MCF 10A (cell line): ENCODE measurements at regions of chr3 and their contacts with region 1.

Region 1: GRCh38 chr3:53255775-53256703 is at the start of gene TKT:
- DNase-seq: peak; percentile 84
- H3K4me3 Mint-ChIP-seq: peak within 1 kb of the TSS; percentile 95
- H3K27ac Mint-ChIP-seq: peak within 1 kb of the TSS; percentile 67
- H3K4me1 Mint-ChIP-seq: peaks cover 23% of the 10 kb centered on the region
- H3K27me3 Mint-ChIP-seq: no peaks in the 10 kb centered on the region
- CTCF ChIP-seq: no peak
- total RNA-seq, gene TKT: 179 and 326 TPM in 2 replicates

Region 2: GRCh38 chr3:53092942-53093341 is 163.1 kb before region 1 on chr3:
- CTCF ChIA-PET with region 1: no interaction called
- POLR2A ChIA-PET with region 1: no interaction called
- intact Hi-C with region 1: no loop called
- DNase-seq: no peak
- H3K4me3 Mint-ChIP-seq: no peak overlapping the region
- H3K27ac Mint-ChIP-seq: no peak overlapping the region
- H3K4me1 Mint-ChIP-seq: no peaks in the 10 kb centered on the region
- H3K27me3 Mint-ChIP-seq: no peaks in the 10 kb centered on the region
- CTCF ChIP-seq: no peak

Region 3: DNA sequence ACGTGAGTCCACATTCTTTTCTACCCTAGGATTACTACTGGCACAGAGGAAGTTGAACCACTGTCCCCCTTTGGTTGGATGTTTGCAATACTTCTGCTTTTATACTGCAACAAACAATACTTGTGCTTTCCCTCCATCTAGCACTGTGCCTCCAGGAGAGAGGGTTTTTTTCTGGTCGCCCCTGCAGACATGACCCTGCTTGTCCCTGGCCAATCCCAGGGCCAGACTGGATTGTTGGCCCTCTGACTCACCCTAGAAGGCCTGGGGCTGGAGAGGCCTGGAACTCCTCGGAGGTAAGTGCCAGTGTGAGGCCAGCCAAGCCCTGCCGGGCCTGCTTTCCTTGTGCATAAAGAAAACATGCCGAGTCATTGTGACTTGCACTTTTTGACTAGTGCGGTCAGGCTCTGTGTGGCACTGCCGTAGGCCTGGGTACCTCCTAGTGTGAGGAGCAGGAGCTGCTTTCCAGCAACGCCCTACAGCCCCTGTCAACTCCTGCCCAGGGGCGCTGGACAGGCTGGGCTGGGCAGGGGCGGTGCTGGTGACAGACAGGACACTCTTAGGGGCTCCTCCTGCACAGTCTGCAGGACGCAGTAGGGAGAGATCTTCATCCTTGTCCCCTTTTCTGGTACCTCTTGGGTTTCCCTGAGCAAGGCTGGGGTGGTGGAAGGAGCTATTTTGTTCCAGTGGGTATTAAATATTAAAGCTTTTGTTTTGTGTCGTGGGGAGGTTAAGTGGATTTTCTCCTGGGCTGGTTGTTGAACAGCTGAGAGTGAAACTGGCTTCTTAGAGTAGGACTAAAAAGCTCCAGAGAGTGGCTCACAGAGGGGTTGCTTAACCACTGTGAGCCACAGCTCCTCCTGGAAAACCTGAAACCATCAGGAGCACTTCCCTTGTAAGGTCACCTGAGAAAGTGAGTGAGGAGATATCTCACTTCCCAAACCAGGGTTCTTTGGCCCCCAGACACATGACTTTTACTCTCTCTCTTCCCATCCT is 14.1 kb after region 1 on chr3:
- CTCF ChIA-PET with region 1: interaction called, 7 read pairs
- POLR2A ChIA-PET with region 1: interaction called, 62 read pairs
- intact Hi-C with region 1: no loop called
- DNase-seq: peak; percentile 100
- H3K4me3 Mint-ChIP-seq: peak overlapping the region; percentile 53
- H3K27ac Mint-ChIP-seq: peak overlapping the region; percentile 99
- H3K4me1 Mint-ChIP-seq: peaks cover 11% of the 10 kb centered on the region
- H3K27me3 Mint-ChIP-seq: no peaks in the 10 kb centered on the region
- CTCF ChIP-seq: no peak

Region 4: GRCh38 chr3:53375019-53375418 is 119.0 kb after region 1 on chr3:
- CTCF ChIA-PET with region 1: no interaction called
- POLR2A ChIA-PET with region 1: no interaction called
- intact Hi-C with region 1: no loop called
- DNase-seq: peak; percentile 83
- H3K4me3 Mint-ChIP-seq: no peak overlapping the region
- H3K27ac Mint-ChIP-seq: no peak overlapping the region
- H3K4me1 Mint-ChIP-seq: peaks cover 4% of the 10 kb centered on the region
- H3K27me3 Mint-ChIP-seq: peaks cover 26% of the 10 kb centered on the region
- CTCF ChIP-seq: peak; percentile 87

Region 5: GRCh38 chr3:53464424-53464823 is 208.4 kb after region 1 on chr3:
- CTCF ChIA-PET with region 1: no interaction called
- POLR2A ChIA-PET with region 1: no interaction called
- intact Hi-C with region 1: no loop called
- DNase-seq: peak; percentile 22
- H3K4me3 Mint-ChIP-seq: no peak overlapping the region
- H3K27ac Mint-ChIP-seq: no peak overlapping the region
- H3K4me1 Mint-ChIP-seq: no peaks in the 10 kb centered on the region
- H3K27me3 Mint-ChIP-seq: peaks cover 10% of the 10 kb centered on the region
- CTCF ChIP-seq: no peak